Right cardiac atrium (tissue), 5 donors: ENCODE measurements at regions of chr6 and their contacts with region 1.

Region 1: DNA sequence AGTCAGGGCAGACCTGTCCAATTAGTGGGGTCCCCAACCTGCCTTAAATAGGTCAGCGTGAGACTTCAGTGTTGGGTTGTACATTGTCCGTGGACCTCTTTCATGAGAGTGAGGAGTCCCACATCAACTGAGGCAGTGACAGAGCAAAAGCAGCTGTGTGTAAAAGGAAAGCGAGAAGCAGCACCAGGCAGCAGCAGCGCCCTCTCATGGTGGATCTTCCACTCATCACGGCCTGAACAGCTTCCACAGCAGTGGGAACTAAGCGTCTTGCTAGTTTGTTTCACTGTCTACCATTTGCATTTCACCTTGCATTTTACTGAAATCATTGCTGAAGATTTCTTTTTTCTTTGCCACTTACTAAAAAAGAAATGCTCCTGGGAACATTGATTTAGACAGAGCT is 333.8 kb downstream of the PKHD1 start:
- DNase-seq: peak; percentile 17 to 65 (median 44)
- ATAC-seq: peak in 1 of 2 donors; percentile 29
- H3K4me3 ChIP-seq: no peak overlapping the region
- H3K27ac ChIP-seq: no peak overlapping the region
- H3K4me1 ChIP-seq: no peaks in the 10 kb centered on the region
- H3K27me3 ChIP-seq: no peaks in the 10 kb centered on the region

Region 2: DNA sequence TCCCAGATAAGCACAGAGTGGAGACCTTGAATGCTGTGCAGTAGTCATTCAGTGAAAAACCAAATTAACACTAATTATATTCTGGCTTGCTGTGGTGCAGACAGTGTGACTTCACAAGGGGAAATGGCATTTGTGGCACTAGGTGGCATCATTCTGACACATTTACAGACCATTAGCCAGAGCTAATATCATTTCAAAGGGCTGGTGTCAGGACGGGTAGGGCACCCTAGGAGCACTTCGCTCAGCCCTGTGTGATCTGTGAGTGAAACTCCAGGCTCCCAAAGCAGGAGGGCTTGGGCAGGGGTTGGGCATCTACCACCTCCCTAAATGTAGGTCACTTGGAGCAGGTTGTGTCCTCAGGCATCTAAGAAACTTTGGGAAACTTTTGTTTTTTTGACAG is 222.0 kb before region 1 on chr6:
- intact Hi-C with region 1: loop called in 1 of 4 experiments (anchors 10 kb)
- DNase-seq: no peak
- ATAC-seq: peak; percentile 14 to 50
- H3K4me3 ChIP-seq: no peak overlapping the region
- H3K27ac ChIP-seq: no peak overlapping the region
- H3K4me1 ChIP-seq: no peaks in the 10 kb centered on the region
- H3K27me3 ChIP-seq: no peaks in the 10 kb centered on the region

Region 3: DNA sequence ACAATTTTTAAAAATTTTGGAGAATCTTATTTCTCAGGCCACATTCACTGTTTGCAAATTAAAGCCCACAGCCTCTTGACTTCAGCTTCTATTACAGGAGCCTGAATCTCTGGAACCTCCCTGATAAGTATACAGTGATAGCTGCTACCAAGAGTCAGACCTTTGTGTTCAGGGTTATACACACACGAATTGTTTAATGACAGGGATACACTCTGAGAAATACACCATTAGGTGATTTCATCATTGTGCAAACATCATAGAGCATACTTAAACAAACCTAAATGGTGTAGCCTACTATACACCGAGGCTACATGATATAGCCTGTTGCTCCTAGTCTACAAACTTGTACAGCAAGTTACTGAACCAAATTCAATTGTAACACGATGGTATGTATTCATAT is 140.1 kb before region 1 on chr6:
- intact Hi-C with region 1: no loop called
- DNase-seq: no peak
- ATAC-seq: no peak
- H3K4me3 ChIP-seq: no peak overlapping the region
- H3K27ac ChIP-seq: no peak overlapping the region
- H3K4me1 ChIP-seq: no peaks in the 10 kb centered on the region
- H3K27me3 ChIP-seq: no peaks in the 10 kb centered on the region

Region 4: DNA sequence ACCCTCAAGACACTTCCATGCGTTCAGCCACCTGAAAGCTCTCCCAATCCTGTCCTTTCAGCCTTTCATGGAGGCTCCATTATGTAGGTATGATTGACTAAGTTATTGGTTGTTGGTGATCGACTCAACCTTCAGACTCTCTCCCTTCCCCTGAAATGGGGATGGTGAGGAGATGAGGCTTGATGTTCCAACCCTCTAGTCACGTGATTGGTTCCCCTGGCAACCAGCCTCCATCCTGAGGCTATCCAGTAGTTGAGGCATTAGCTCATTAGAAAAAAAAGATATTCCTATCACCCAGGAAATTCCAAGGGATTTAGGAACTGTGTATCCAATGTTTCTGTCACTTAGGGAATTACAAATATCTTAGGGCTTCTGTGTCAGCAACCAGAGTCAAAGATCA is 92.9 kb before region 1 on chr6:
- intact Hi-C with region 1: no loop called
- DNase-seq: no peak
- ATAC-seq: no peak
- H3K4me3 ChIP-seq: no peak overlapping the region
- H3K27ac ChIP-seq: no peak overlapping the region
- H3K4me1 ChIP-seq: no peaks in the 10 kb centered on the region
- H3K27me3 ChIP-seq: no peaks in the 10 kb centered on the region